ENCODE measurements at regions of chr17 and their contacts with region 1.

Region 1: DNA sequence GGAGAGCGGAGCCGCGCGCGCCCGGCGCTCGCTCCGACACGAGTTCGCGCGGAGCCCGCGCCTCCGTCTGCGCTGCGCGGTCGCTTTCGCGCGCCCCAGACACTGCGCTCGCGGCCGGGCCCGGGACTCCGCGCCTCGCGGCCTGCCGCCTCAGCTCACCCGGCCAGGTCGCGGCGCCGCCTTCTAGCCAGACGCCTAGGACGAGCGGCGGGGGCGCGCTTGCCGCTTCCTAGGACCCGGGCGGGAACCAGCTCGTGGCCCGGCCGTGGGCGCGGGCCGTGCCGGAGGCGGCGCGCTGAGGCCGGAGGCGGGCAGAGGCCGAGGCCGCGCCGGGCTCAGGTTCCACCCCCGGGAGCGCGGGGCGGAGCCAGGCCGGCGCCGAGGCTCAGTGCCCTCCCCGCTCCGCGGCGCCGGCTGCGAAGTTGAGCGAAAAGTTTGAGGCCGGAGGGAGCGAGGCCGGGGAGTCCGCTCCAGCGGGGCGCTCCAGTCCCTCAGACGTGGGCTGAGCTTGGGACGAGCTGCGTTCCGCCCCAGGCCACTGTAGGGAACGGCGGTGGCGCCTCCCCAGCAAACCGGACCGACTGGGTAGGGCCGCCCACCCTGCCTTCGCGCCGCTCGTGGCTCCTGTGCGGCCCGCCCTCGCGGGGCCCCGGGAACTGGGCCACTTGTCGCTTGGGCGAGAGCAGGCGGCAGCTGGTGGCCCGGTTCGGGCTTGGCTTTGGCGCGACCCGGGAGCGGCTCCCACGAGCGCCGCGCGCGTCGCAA is at the start of gene SPHK1:
- DNase-seq: peak; percentile 37 to 78
- H3K4me3 ChIP-seq: peak within 1 kb of the TSS; percentile 68
- H3K27ac ChIP-seq: no peak within 1 kb of the TSS
- H3K4me1 ChIP-seq: peaks cover 4% of the 10 kb centered on the region; the same call in 1 of the 2 replicates
- H3K27me3 ChIP-seq: no peaks in the 10 kb centered on the region
- CTCF ChIP-seq: no peak
- total RNA-seq, gene SPHK1: 5.5 and 9.3 TPM in 2 replicates

Region 2: DNA sequence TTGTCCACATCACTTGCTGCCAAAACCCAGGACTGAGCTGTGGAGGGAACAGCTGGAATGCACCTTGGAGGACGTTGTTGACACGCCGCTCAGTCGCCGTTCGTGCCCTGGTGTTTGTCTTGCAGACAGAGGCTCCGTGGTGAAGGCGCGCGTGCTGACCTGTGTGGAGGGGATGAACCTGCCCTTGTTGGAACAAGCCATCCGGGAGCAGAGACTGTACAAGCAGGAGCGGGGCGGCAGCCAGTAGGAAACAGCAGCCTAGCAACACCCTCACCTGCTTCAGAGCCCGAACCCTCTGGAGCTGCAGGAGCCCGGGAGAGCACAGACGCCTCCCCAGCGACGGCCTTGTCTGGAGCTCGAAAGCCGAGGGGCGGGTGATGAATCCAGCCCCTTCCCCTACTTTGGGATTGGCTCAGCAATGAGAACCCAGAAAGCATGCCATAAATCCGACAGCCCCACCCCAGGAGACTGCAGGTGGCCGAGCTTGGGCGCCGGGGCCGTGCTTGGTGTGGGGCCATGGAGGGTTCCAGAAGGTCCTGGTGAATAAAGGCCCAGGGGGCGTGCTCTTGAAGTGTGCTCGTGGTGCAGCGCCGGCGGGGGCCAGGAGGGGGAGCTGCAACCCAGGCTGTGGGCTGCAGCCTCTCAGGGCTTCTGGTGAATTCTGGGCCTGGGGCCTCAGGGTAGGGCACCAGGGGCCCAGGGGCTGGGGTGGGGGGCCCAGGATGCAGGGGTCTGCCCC is 384.2 kb before region 1 on chr17:
- CTCF ChIA-PET with region 1: no interaction called
- POLR2A ChIA-PET with region 1: no interaction called
- intact Hi-C with region 1: no loop called
- DNase-seq: peak in 1 of 2 experiments; percentile 52
- H3K4me3 ChIP-seq: no peak overlapping the region
- H3K27ac ChIP-seq: no peak overlapping the region
- H3K4me1 ChIP-seq: peaks cover 51% of the 10 kb centered on the region
- H3K27me3 ChIP-seq: no peaks in the 10 kb centered on the region
- CTCF ChIP-seq: peak; percentile 88

Region 3: GRCh38 chr17:76353599-76354316 is 30.6 kb before region 1 on chr17 and contains the start of gene PRPSAP1:
- CTCF ChIA-PET with region 1: no interaction called
- POLR2A ChIA-PET with region 1: no interaction called
- intact Hi-C with region 1: loop called (anchors 1 kb)
- DNase-seq: peak; percentile 79 to 88
- H3K4me3 ChIP-seq: peak within 1 kb of the TSS; percentile 73
- H3K27ac ChIP-seq: peak within 1 kb of the TSS; percentile 75
- H3K4me1 ChIP-seq: no peaks in the 10 kb centered on the region
- H3K27me3 ChIP-seq: no peaks in the 10 kb centered on the region
- CTCF ChIP-seq: peak; percentile 49; the same call in 1 of the 2 replicates
- total RNA-seq, gene PRPSAP1: 63.3 and 73.0 TPM in 2 replicates

Region 4: GRCh38 chr17:77542551-77543490 is 1158.4 kb after region 1 on chr17:
- CTCF ChIA-PET with region 1: interaction called, 12 read pairs
- POLR2A ChIA-PET with region 1: no interaction called
- intact Hi-C with region 1: no loop called
- DNase-seq: peak; percentile 53 to 54
- H3K4me3 ChIP-seq: no peak overlapping the region
- H3K27ac ChIP-seq: no peak overlapping the region
- H3K4me1 ChIP-seq: no peaks in the 10 kb centered on the region
- H3K27me3 ChIP-seq: peaks cover 55% of the 10 kb centered on the region
- CTCF ChIP-seq: peak; percentile 76

Measured in PC-9 (cell line).